ENCODE measurements at regions of chr1 and their contacts with region 1.

Region 1: GRCh38 chr1:203428981-203429599 is 46.5 kb upstream of the PRELP start:
- DNase-seq: no peak
- H3K4me3 ChIP-seq: no peak overlapping the region
- H3K27me3 ChIP-seq: peaks cover 20% of the 10 kb centered on the region
- CTCF ChIP-seq: no peak

Region 2: DNA sequence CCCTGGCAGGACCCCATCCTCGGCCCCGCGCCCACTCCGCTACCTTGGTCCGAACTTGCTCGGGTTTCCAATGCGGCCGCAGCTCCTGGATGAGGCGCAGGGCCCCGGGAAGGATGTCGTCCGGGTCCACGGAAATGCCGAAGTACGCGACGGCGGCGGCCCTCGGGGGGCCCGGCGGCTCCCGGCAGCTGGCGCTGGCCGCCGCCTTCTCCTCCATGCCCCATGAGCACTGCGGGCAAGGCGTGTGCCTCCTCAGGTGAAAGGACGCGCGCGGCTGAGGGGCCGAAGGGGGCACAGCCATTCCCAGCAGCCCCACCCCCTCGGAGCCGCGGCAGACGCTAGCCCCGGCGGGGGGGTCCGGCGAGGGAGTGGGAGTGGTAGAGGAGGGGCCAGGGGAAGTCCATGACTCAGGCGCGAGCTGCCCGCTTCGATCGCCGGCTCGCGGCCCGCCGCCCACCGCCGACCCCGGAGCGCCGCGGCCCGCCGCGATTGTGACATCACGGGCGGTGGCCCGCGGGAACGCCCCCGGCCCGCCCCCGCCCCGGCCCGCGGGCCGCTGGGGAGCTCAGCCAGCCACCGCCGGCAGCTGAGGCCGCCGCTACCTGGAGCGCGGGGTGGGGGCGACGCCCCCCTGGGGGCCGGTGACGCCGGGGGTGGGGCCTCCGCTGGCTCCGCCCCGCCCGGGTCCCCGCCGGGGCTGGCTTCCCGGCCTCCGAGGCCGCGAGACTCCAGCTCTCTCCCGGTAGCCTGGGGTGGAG is 722.6 kb after region 1 on chr1 and contains the start of gene ETNK2:
- CTCF ChIA-PET with region 1: no interaction called
- POLR2A ChIA-PET with region 1: interaction called, 25 read pairs
- DNase-seq: no peak
- H3K4me3 ChIP-seq: peak within 1 kb of the TSS; percentile 73
- H3K27me3 ChIP-seq: no peaks in the 10 kb centered on the region; the same call in 1 of the 2 replicates
- CTCF ChIP-seq: no peak
- polyA plus RNA-seq, gene ETNK2: 27.2 and 30.7 TPM in 2 replicates